PC-3 (cell line): ENCODE measurements at regions of chr11 and their contacts with region 1.

Region 1: GRCh38 chr11:5808500-5809121 is at the start of gene OR52N2:
- DNase-seq: peak; percentile 79
- ATAC-seq: peak; percentile 90
- H3K4me3 ChIP-seq: peak within 1 kb of the TSS; percentile 62
- H3K27ac ChIP-seq: no peak within 1 kb of the TSS
- H3K4me1 ChIP-seq: no peaks in the 10 kb centered on the region
- H3K27me3 ChIP-seq: peaks cover 39% of the 10 kb centered on the region
- CTCF ChIP-seq: peak; percentile 83
- total RNA-seq, gene OR52N2: not detected in 2 replicates

Region 2: GRCh38 chr11:5123802-5124521 is 684.6 kb before region 1 on chr11:
- CTCF ChIA-PET with region 1: no interaction called
- POLR2A ChIA-PET with region 1: no interaction called
- intact Hi-C with region 1: loop called (anchors 1 kb)
- DNase-seq: peak; percentile 71
- ATAC-seq: peak; percentile 67
- H3K4me3 ChIP-seq: no peak overlapping the region
- H3K27ac ChIP-seq: no peak overlapping the region
- H3K4me1 ChIP-seq: no peaks in the 10 kb centered on the region
- H3K27me3 ChIP-seq: no peaks in the 10 kb centered on the region
- CTCF ChIP-seq: peak; percentile 81

Region 3: DNA sequence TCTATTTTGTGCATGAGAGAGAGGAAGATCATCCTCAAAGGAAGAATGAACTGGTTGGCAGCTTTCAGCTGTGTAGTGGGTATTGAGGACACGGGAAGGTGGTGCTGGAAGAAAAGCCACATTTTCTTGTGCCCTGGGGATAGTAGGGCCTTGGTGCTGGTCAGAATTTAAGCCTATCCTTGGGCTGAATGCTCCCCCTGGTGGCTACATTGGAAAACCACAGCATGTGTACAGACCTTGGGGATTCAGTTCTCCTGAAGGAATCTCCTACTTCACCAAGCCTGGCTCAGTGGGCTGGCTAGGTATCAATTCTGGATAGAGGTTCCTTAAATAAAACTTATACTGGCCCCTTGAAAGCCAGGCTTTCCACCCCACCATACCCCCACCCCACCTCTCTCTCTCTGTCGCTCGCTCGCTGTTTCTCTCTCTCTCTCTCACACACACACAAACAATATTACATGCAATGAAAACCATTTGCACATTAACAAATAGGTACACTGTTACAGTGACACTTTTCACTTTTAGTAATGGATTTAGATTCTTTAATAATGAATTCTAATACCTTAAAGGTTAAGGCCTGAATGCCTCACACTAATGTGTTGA is 427.8 kb before region 1 on chr11:
- CTCF ChIA-PET with region 1: no interaction called
- POLR2A ChIA-PET with region 1: no interaction called
- intact Hi-C with region 1: loop called (anchors 5 kb)
- DNase-seq: peak; percentile 65
- ATAC-seq: peak; percentile 89
- H3K4me3 ChIP-seq: no peak overlapping the region
- H3K27ac ChIP-seq: no peak overlapping the region
- H3K4me1 ChIP-seq: no peaks in the 10 kb centered on the region
- H3K27me3 ChIP-seq: no peaks in the 10 kb centered on the region
- CTCF ChIP-seq: peak; percentile 78

Region 4: DNA sequence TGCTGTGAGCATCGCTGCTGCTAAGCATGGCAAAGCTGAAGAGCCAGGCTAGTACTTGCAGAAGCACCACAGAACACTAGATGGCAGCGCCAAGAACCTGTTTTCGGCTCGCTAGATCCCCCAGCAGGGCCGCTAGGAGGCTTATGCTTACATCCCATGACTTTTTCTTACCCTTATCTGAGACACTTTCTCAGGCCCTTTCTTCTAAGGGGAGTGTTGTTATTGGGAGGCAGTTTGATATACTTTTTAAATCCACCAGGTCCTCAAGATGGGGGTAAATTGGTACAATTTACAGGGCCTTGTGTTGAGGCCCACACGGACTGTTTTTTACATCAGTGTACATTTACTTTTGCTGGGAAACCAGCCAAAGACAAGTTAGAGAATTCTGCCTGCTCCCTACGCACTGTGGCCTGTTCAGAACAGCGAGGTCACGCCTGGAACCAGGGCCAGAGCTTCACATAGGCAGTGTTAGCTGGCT is 208.2 kb before region 1 on chr11:
- CTCF ChIA-PET with region 1: no interaction called
- POLR2A ChIA-PET with region 1: no interaction called
- intact Hi-C with region 1: loop called (anchors 5 kb)
- DNase-seq: peak; percentile 72
- ATAC-seq: peak; percentile 65
- H3K4me3 ChIP-seq: no peak overlapping the region
- H3K27ac ChIP-seq: no peak overlapping the region
- H3K4me1 ChIP-seq: peaks cover 20% of the 10 kb centered on the region
- H3K27me3 ChIP-seq: no peaks in the 10 kb centered on the region
- CTCF ChIP-seq: peak; percentile 79

Region 5: GRCh38 chr11:5712507-5712906 is 96.1 kb before region 1 on chr11:
- CTCF ChIA-PET with region 1: no interaction called
- POLR2A ChIA-PET with region 1: no interaction called
- intact Hi-C with region 1: no loop called
- DNase-seq: peak; percentile 52
- ATAC-seq: peak; percentile 43
- H3K4me3 ChIP-seq: no peak overlapping the region
- H3K27ac ChIP-seq: no peak overlapping the region
- H3K4me1 ChIP-seq: no peaks in the 10 kb centered on the region
- H3K27me3 ChIP-seq: peaks cover 9% of the 10 kb centered on the region
- CTCF ChIP-seq: peak; percentile 60

Region 6: GRCh38 chr11:5992604-5993251 is 184.1 kb after region 1 on chr11:
- CTCF ChIA-PET with region 1: no interaction called
- POLR2A ChIA-PET with region 1: no interaction called
- intact Hi-C with region 1: no loop called
- DNase-seq: peak; percentile 33
- ATAC-seq: no peak
- H3K4me3 ChIP-seq: no peak overlapping the region
- H3K27ac ChIP-seq: no peak overlapping the region
- H3K4me1 ChIP-seq: no peaks in the 10 kb centered on the region
- H3K27me3 ChIP-seq: no peaks in the 10 kb centered on the region
- CTCF ChIP-seq: peak; percentile 66

Region 7: DNA sequence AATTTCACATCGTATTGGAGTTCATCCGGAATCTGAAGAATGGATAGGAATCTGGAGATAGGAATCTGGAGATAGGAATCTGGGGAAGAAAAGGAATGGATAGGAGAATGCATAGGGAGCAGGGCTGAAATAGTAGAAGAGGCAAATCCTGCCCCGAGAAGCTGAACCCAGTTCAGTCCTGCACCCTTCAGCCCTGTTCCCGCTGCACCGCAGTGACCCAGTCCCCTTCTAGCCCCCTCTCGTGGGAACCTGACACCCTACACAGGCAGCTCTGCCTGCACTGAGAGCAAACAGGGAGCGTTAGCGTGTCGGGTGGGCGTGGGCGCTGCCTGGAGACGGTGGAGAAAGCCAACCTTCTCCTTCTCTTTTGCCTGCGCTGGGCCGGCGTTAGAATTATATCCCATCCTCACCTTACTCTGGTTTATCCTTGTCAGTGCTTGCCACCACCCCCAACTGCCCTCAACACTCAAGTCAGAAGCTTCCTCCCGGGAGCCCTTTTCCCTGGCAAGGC is 450.0 kb after region 1 on chr11:
- CTCF ChIA-PET with region 1: no interaction called
- POLR2A ChIA-PET with region 1: no interaction called
- intact Hi-C with region 1: no loop called
- DNase-seq: no peak
- ATAC-seq: no peak
- H3K4me3 ChIP-seq: no peak overlapping the region
- H3K27ac ChIP-seq: no peak overlapping the region
- H3K4me1 ChIP-seq: no peaks in the 10 kb centered on the region
- H3K27me3 ChIP-seq: peaks cover 86% of the 10 kb centered on the region
- CTCF ChIP-seq: no peak